Naive thymus-derived CD4-positive, alpha-beta T cell (primary cell): ENCODE measurements at regions of chr5 and their contacts with region 1.

Region 1: DNA sequence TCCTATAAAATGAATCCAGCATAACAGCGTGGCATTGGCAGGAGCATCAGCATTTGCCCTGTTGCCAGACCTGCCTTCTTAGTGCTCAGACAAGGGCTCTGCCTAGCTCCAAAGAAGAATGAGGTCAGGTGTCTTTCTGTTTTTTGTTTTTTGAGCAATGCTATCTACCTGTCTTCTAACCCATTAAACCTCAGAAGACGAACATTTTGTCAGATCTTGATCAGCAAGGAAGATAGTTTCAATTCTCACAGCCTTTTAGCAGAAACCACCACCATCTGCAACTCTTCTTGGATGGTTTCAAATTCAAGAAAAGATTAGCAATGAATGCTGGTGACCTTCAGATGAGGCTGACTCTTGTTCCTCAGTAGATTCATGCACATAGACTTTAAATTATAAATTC is 103.5 kb upstream of the IQGAP2 start:
- DNase-seq: peak in 2 of 9 donors; percentile 7 to 8
- ATAC-seq: peak; percentile 22
- H3K4me3 ChIP-seq: no peak overlapping the region
- H3K4me3 Mint-ChIP-seq: peak overlapping the region in 1 of 10 donors; percentile 82
- H3K27ac ChIP-seq: no peak overlapping the region
- H3K27ac Mint-ChIP-seq: peak overlapping the region in 4 of 9 donors; percentile 49 to 93 (median 60)
- H3K4me1 ChIP-seq: peaks cover 12 to 19% of the 10 kb centered on the region in 2 donors
- H3K4me1 Mint-ChIP-seq: peaks cover 12 to 52% (median 21%) of the 10 kb centered on the region in 7 donors
- H3K27me3 ChIP-seq: no peaks in the 10 kb centered on the region
- H3K27me3 Mint-ChIP-seq: peaks cover 0 to 24% (median 3%) of the 10 kb centered on the region in 5 donors

Region 2: GRCh38 chr5:76269932-76270610 is 29.5 kb before region 1 on chr5:
- CTCF ChIA-PET with region 1: no interaction called
- POLR2A ChIA-PET with region 1: no interaction called
- intact Hi-C with region 1: no loop called
- DNase-seq: peak in 1 of 9 donors; percentile 44
- ATAC-seq: peak; percentile 22
- H3K4me3 ChIP-seq: no peak overlapping the region
- H3K4me3 Mint-ChIP-seq: peak overlapping the region in 1 of 10 donors; percentile 77
- H3K27ac ChIP-seq: no peak overlapping the region
- H3K27ac Mint-ChIP-seq: peak overlapping the region in 1 of 9 donors; percentile 89
- H3K4me1 ChIP-seq: no peaks in the 10 kb centered on the region
- H3K4me1 Mint-ChIP-seq: peaks cover 0 to 42% (median 4%) of the 10 kb centered on the region in 7 donors
- H3K27me3 ChIP-seq: no peaks in the 10 kb centered on the region
- H3K27me3 Mint-ChIP-seq: peaks cover 0 to 6% (median 4%) of the 10 kb centered on the region in 5 donors

Region 3: DNA sequence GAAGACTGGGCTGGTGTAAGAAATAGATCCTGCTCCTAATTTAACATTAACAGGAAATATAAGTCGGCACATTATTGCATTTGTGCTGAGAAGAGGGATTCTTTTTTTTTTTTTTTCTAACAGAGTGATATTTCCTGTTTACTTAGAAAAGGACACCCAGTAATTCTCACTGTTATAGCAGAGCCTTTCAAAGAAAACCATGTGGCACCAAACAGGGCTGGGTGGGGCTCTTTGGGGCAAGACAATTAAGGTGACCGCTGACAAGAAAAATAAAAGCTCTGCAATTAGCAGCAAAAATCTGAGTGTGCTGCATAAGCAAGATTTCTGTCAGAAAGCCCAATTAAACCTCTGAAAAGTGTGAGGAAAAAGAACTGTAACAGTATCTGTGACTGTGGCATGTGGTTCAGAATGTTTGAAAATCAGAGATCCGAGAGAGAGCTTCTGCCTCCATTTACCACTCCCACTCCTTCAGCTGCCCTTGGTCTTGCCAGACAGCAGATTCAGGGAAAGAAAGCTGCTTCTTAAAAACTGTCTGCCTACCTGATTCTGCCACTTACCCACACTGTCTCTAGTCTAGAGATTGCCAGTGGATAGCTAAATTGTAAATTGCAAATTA is 26.4 kb after region 1 on chr5:
- CTCF ChIA-PET with region 1: no interaction called
- POLR2A ChIA-PET with region 1: no interaction called
- intact Hi-C with region 1: loop called in 1 of 2 experiments (anchors 1 kb)
- DNase-seq: peak in 6 of 9 donors; percentile 30 to 63 (median 48)
- ATAC-seq: peak; percentile 90
- H3K4me3 ChIP-seq: peak overlapping the region; percentile 22
- H3K4me3 Mint-ChIP-seq: peak overlapping the region; percentile 71 to 84 (median 76)
- H3K27ac ChIP-seq: peak overlapping the region; percentile 59
- H3K27ac Mint-ChIP-seq: peak overlapping the region; percentile 88 to 98 (median 93)
- H3K4me1 ChIP-seq: peaks cover 31 to 57% of the 10 kb centered on the region in 2 donors
- H3K4me1 Mint-ChIP-seq: peaks cover 46 to 75% (median 58%) of the 10 kb centered on the region in 7 donors
- H3K27me3 ChIP-seq: no peaks in the 10 kb centered on the region
- H3K27me3 Mint-ChIP-seq: no peaks in the 10 kb centered on the region